ENCODE measurements at regions of chr18 and their contacts with region 1.

Region 1: DNA sequence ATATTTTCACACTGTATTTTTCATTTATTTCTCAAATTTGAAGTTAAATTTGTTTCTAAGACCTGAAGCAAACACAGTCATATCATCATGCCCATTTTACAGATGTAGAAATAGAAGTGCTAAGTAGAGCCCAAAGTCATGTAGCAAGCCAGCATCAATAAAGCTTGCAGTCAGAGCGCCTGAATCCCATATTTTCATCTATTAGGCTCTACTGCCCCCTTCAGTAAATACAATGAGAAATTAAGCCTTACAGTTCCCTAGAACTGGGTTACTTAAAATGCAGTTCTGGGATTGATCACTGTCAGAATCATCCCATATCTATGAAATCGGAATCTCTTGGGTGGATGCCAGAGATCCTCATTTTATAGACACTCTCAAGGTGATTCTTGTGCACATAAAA is 419.9 kb downstream of the TGIF1 start:
- DNase-seq: no peak
- ATAC-seq: peak; percentile 71
- H3K4me3 Mint-ChIP-seq: no peak overlapping the region
- H3K27ac Mint-ChIP-seq: no peak overlapping the region
- H3K4me1 Mint-ChIP-seq: peaks cover 42% of the 10 kb centered on the region
- H3K27me3 Mint-ChIP-seq: no peaks in the 10 kb centered on the region
- CTCF ChIP-seq: 0 out of 2 replicates have a peak, but pooled peaks have one; percentile 28

Region 2: DNA sequence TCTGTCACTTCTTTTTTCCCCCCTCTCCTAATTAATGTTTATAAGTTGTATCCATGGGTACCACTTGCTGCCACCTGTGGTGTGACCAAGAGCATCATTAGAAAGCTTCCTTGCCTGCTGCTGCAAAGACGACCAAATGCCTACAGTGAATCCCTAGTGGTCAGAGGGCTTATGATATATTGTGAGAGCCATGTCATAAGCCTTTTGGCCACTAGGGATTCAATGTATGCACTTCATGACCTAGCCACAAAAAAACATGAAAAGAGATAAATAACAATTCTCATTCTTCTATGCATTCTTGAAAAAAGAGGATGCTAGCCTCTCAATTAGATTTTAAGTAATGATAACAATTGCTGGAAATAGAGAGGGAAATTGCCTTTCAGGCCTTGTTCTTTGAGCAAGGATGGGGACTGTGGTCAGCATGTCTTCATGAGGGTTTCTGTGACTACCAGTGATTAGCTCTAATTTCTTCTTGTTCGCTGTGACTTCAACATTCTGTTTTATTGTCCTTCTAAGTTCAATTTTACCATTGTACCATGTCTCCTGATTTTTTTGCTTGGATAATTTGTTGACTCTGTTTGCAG is 15.5 kb after region 1 on chr18:
- CTCF ChIA-PET with region 1: interaction called, 12 read pairs
- POLR2A ChIA-PET with region 1: no interaction called
- DNase-seq: no peak
- ATAC-seq: peak; percentile 94
- H3K4me3 Mint-ChIP-seq: no peak overlapping the region
- H3K27ac Mint-ChIP-seq: no peak overlapping the region
- H3K4me1 Mint-ChIP-seq: peaks cover 7% of the 10 kb centered on the region; the same call in 1 of the 2 replicates
- H3K27me3 Mint-ChIP-seq: no peaks in the 10 kb centered on the region
- CTCF ChIP-seq: no peak